ENCODE measurements at regions of chr12 and their contacts with region 1.

Region 1: DNA sequence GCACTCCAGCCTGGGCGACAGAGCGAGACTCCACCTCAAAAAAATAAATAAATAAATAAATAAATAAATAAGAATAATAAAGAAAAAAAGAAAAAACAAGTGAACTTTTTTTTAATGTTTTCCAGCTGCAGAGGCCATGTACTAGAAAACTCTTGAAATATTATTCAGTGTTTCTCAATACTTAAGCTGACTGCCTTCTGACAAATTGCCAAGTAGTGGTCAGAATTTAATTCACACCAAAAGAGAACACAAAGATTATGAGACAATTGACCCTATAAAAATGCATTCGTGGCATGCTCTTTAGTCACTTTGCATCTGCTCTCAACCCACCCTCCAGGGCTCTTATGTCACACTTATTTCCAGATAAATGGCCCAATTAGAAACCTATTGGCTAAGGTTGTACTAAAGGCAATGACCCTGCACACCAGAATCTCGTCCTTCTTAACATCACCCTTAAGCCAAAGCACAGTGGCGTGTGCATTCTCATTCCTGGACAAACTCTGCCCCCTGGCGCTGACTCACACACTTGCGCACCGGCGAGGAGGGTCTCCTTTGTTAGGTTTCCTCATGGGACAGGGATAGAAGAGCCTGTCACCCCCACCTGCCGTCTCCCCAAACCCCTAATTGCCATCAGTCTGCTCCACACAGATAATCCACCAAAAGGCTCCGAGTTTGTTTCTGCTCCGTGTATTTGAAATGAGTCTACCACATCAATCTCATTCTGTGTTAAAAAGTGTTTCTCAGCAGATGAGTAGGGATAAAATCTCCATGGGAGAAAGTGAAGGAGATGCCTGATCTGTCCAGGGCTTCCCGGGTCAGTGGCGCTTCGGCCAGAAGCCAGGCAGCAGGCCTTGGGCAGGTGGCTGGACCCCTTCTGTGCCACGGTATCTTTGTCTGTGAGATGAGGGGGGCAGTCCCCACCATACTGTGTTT is 73.1 kb upstream of the CEP83 start:
- DNase-seq: peak; percentile 50
- ATAC-seq: peak; percentile 97
- H3K4me3 ChIP-seq: no peak overlapping the region
- H3K27ac ChIP-seq: no peak overlapping the region
- H3K4me1 ChIP-seq: peaks cover 0 to 3% of the 10 kb centered on the region in 2 experiments; a peak in 1 of 4 replicates
- H3K27me3 ChIP-seq: no peaks in the 10 kb centered on the region
- CTCF ChIP-seq: peak; percentile 83 to 94 (median 89)
- POLR2A ChIP-seq: no peak
- RAD21 ChIP-seq: peak; percentile 98

Region 2: DNA sequence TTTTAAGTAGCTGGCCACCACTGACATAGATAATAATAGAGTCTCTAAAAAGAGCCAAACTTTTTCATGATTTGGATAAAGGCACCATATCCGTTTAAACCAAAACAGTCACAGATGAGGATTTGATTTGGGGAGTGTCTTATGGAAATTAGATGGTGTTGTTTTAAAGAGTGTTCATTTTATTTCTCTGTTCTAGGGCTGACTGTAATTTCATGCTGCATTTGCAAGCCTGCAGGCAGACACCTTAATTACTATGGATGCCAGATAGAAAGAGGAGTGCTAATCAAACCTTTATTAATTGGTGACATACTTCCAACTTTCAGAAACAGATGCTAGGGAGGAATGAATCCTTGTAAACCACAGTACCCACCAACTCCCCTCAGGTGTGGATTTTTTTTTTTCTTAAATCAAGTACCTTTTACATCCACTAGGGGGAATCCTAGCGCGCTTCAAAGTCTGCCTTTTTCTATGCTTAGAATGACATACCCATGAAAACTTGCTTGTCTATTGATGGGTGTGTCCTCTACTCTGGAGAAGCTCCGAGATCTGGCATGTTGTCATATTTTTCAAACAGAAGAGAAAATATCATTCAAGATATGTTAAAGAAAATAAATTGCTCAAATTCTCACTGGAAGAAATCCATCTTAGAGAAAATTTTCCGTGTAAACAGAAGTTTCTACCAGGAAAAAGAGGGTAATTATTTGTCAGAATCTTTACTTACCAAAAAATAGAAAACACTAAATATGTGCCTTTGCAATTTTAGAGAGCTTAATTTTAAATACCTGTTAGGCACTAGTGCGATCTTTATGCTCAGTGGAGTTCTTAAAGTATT is 398.6 kb before region 1 on chr12:
- CTCF ChIA-PET with region 1: interaction called, 6 read pairs
- POLR2A ChIA-PET with region 1: no interaction called
- RAD21 ChIA-PET with region 1: interaction called, 3 read pairs
- intact Hi-C with region 1: loop called (anchors 1 kb)
- DNase-seq: peak; percentile 61
- ATAC-seq: peak; percentile 83
- H3K4me3 ChIP-seq: no peak overlapping the region
- H3K27ac ChIP-seq: no peak overlapping the region
- H3K4me1 ChIP-seq: peaks cover 0 to 2% of the 10 kb centered on the region in 2 experiments; a peak in 1 of 4 replicates
- H3K27me3 ChIP-seq: no peaks in the 10 kb centered on the region; the same call in 1 of the 2 replicates
- CTCF ChIP-seq: peak; percentile 67 to 76 (median 68); a peak in 5 of 6 replicates
- POLR2A ChIP-seq: no peak
- RAD21 ChIP-seq: peak; percentile 73

Region 3: GRCh38 chr12:94140556-94140955 is 392.2 kb before region 1 on chr12:
- CTCF ChIA-PET with region 1: interaction called, 8 read pairs
- POLR2A ChIA-PET with region 1: no interaction called
- RAD21 ChIA-PET with region 1: no interaction called
- intact Hi-C with region 1: loop called (anchors 1 kb)
- DNase-seq: peak; percentile 19
- ATAC-seq: peak; percentile 91
- H3K4me3 ChIP-seq: no peak overlapping the region
- H3K27ac ChIP-seq: no peak overlapping the region
- H3K4me1 ChIP-seq: no peaks in the 10 kb centered on the region
- H3K27me3 ChIP-seq: no peaks in the 10 kb centered on the region
- CTCF ChIP-seq: peak; percentile 53 to 61 (median 59); a peak in 5 of 6 replicates
- POLR2A ChIP-seq: no peak
- RAD21 ChIP-seq: peak; percentile 76

Region 4: GRCh38 chr12:94326727-94327126 is 206.0 kb before region 1 on chr12:
- CTCF ChIA-PET with region 1: no interaction called
- POLR2A ChIA-PET with region 1: no interaction called
- RAD21 ChIA-PET with region 1: no interaction called
- intact Hi-C with region 1: loop called (anchors 5 kb)
- DNase-seq: no peak
- ATAC-seq: no peak
- H3K4me3 ChIP-seq: no peak overlapping the region
- H3K27ac ChIP-seq: no peak overlapping the region
- H3K4me1 ChIP-seq: no peaks in the 10 kb centered on the region
- H3K27me3 ChIP-seq: no peaks in the 10 kb centered on the region
- CTCF ChIP-seq: no peak
- POLR2A ChIP-seq: no peak
- RAD21 ChIP-seq: no peak

Region 5: DNA sequence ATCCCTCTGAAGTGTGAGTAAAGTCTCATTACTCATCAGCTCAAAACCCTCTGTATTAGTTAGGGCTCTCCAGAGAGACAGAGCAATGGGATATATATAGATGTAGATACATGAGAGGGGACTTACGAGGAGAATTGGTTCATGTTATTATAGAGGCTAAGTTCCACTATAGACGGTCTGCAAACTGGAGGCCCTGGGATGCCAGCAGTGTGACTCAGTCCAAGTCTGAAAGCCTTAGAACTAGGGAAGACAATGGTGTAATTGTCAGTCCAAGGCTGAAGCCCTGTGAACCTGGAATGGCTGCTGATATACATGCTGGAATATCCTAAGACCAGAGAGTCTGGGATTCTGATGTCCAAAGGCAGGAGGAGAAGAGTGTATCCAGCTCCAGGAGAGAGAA is 15.8 kb before region 1 on chr12:
- CTCF ChIA-PET with region 1: no interaction called
- POLR2A ChIA-PET with region 1: no interaction called
- RAD21 ChIA-PET with region 1: no interaction called
- intact Hi-C with region 1: no loop called
- DNase-seq: peak; percentile 29
- ATAC-seq: peak; percentile 82
- H3K4me3 ChIP-seq: no peak overlapping the region
- H3K27ac ChIP-seq: no peak overlapping the region
- H3K4me1 ChIP-seq: peaks cover 0 to 15% of the 10 kb centered on the region in 2 experiments; a peak in 1 of 4 replicates
- H3K27me3 ChIP-seq: no peaks in the 10 kb centered on the region
- CTCF ChIP-seq: no peak
- POLR2A ChIP-seq: no peak
- RAD21 ChIP-seq: no peak

Measured in HCT116 (cell line).